AG04449 (cell line): ENCODE measurements at regions of chr12 and their contacts with region 1.

Region 1: DNA sequence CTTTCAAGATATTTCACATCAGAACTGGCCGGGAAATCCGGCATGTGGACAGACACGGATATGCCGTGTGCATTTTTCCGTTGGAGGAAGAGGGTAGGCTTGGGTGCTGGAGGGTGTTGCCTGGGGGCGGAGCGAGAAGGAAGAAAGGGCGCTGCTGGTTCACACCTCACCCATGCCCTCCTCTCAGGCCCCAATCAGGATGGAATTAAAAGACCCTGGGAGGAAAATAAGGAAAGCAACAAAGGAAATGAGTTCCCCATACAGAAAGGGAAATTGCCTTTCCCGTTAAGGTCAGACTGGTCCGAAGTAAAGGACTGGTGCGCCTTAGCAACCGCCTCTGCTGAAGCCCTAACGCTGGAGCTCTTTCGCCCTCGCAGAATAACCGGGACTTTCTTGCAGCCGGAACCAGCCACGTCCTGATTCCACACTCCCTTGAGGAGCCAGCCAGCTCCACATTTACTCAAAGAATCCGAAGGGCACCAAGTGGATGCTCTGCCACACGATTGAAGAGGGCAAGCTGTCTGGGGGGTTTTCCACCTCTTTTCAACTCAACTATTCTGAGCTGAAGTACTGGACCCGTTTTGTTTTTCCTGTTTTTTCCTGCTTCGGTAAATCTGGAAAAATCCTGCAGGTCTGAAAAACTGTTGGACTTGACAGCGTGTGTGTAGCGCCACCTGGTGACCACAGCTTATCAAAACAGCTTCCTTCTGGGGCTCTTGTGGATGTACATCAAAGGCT is 37.7 kb upstream of the BCL2L14 start:
- DNase-seq: peak; percentile 41
- H3K4me3 ChIP-seq: peak overlapping the region; percentile 57
- CTCF ChIP-seq: peak; percentile 75

Region 2: GRCh38 chr12:11553871-11554533 is 479.0 kb before region 1 on chr12:
- CTCF ChIA-PET with region 1: interaction called, 58 read pairs
- POLR2A ChIA-PET with region 1: no interaction called
- DNase-seq: no peak
- H3K4me3 ChIP-seq: no peak overlapping the region
- CTCF ChIP-seq: peak; percentile 54

Region 3: DNA sequence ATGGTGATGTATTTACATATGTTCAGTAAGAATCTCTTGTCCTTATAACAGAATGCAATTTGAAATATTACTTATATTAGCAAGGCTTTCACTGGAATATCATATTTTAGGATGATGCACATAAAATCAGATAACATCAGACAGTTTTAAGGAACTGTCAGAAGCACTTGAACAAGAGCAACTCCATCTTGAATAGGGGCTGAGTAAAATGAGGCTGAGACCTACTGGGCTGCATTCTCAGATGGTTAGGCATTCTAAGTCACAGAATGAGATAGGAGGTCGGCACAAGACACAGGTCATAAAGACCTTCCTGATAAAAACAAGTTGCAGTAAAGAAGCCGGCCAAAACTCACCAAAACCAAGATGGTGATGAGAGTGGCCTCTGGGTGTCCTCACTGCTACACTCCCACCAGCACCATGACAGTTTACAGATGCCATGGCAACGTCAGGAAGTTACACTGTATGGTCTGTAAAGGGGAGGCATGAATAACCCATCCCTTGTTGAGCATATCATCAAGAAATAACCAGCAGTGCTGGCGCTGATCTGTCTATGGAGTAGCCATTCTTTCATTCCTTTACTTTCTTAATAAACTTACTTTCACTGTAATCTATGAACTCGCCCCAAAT is 411.1 kb before region 1 on chr12:
- CTCF ChIA-PET with region 1: interaction called, 10 read pairs
- POLR2A ChIA-PET with region 1: no interaction called
- DNase-seq: no peak
- H3K4me3 ChIP-seq: no peak overlapping the region
- CTCF ChIP-seq: no peak

Region 4: DNA sequence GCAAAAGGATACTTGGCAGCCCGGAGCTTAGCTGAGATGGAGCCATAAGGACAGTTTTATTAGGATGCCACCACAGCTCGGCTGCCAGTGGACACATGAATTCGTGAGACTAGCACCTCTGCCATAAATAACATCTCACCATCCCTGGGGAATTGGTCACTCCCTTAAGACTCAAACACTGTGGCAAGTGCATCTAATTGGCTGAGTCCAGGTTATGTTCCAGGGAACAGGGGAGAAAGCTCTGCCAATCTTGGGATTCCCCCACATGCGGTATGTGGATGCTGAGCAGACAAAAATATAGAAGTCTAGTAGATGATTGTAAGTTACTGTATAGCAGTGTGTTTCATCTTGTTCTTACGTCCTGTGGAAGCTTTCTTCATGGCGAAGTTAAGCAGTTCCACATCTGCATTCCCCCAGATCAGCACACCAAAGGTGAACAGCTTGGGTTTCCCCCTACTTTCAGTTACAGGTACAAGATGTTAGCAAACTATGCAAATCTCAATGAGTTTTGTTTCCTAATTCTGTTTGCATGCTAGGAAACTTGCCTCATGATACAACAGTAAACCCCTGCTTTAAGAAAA is 252.4 kb before region 1 on chr12:
- CTCF ChIA-PET with region 1: interaction called, 11 read pairs
- POLR2A ChIA-PET with region 1: no interaction called
- DNase-seq: no peak
- H3K4me3 ChIP-seq: no peak overlapping the region
- CTCF ChIP-seq: no peak

Region 5: DNA sequence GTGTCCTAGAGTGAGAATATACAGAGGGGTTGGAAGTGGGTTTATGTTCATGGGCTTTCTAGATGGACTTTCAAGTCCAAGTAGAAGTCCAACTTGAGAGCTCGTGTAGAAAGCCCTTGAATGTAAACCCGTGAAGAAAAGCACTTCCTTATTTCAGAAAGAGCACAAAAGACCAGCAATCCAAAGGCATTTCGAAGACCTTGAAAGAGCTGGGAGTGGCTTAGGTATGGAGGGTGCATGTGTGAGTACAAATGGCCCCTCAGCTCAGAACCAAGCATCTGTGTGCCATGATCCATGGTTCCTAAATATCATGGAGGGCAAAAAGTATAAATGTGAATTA is 222.8 kb before region 1 on chr12:
- CTCF ChIA-PET with region 1: interaction called, 11 read pairs
- POLR2A ChIA-PET with region 1: no interaction called
- DNase-seq: no peak
- H3K4me3 ChIP-seq: no peak overlapping the region
- CTCF ChIP-seq: no peak

Region 6: DNA sequence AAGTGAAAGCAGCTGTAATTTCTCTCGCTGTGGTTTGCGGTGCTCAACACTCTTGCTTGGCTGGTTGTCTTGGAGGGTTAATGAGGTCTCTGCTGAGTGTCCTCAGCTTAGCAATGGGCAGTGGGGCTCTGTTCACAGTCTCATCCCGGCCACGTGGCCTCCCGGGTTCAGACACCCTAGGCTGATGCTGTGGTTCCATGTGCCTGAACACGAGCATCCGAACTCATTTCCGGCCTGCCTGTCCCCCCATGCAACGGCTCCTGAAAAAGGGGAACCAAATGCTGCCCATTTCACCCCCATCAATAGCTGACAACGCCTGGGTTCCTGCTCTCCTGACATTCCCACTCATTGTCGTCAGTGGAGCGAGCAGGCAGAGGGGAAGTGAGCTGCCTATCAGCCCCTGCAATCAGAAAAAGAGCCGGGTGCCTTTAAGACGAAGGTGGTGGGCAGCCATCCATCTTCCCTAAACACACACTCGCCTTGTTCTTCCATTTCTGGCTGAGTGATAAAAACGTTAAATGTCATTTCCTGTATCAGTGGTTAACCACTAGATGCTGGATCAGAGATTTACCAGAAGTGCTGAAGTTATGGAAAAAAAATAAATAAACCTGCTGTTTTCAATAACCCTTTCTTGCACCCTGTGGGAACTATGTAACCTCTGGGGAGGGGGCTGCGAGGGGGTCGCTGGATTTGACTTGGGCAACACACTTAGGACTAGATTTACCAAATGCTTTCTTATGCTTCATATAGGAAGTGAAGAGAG is 22.6 kb before region 1 on chr12:
- CTCF ChIA-PET with region 1: interaction called, 14 read pairs
- POLR2A ChIA-PET with region 1: no interaction called
- DNase-seq: no peak
- H3K4me3 ChIP-seq: peak overlapping the region; percentile 6; the same call in 1 of the 2 replicates
- CTCF ChIP-seq: no peak

Region 7: DNA sequence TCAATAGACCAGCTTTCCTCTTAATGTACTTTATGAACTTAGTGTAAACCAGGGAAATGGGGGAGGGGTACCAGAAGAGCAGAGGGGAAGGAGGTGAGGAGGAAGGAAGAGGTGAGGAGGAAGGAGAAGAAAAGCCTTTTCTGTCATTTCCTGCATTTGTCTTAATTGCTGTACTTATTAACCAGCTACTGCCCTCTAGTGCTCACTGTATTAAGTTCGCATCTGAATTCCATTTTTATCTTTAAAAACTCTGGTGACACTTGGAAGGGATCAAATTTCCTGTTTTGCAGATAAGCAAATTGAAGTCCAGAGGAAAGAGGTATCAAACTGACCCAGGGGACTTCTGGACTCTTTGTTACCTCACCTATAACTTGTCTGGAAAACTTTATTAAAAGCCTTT is 294.8 kb after region 1 on chr12:
- CTCF ChIA-PET with region 1: interaction called, 73 read pairs
- POLR2A ChIA-PET with region 1: no interaction called
- DNase-seq: no peak
- H3K4me3 ChIP-seq: no peak overlapping the region
- CTCF ChIP-seq: peak; percentile 42